ENCODE measurements at regions of chr2 and their contacts with region 1.

Region 1: DNA sequence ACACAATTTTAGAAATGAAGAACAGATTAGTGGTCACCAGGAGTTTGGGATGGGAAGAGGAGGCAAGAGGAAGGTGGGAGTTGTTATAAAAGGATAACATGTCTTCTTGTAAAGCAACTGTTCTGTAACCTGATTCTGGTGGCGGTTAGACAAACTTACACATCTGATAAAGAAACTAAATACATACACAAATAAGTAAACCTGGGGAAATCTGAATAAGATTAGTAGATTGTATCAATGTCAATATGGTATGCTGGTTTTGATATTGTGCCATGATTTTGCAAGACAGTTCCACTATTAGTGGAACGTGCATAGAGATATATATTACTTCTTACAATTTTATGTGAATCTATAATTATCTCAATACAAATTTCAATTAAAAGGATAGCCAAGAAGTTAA is 96.0 kb downstream of the MSTN start:
- DNase-seq: no peak

Region 2: DNA sequence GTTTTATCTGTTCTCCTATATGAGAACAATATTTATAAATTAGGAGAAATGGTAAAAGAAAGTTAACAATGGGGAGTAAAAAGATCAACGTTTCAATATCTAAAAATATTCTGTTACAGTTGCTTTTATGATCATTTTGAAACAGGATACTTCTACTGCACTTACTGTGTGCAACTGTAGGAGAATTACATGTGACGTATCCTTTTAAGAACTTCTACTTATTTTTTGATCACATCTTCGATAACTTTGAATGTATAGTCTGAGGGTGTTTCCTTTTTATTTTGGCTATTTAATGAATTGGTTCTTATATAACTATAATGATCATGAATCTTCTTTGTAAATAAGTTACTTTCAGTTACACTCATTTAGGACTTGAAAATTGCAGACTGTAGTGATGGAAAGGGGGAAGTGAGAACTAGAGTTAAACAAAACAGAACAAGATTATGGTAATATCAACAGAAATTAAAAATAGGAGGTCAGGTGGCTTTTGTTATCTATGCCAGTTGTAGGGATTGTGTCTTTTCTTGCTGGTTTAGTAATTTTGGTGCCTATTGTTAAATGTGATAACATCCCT is 13.9 kb before region 1 on chr2:
- intact Hi-C with region 1: loop called in 1 of 2 experiments (anchors 1 kb)
- DNase-seq: no peak

Measured in posterior vena cava (tissue), 2 donors.